ENCODE measurements at regions of chr19 and their contacts with region 1.

Region 1: DNA sequence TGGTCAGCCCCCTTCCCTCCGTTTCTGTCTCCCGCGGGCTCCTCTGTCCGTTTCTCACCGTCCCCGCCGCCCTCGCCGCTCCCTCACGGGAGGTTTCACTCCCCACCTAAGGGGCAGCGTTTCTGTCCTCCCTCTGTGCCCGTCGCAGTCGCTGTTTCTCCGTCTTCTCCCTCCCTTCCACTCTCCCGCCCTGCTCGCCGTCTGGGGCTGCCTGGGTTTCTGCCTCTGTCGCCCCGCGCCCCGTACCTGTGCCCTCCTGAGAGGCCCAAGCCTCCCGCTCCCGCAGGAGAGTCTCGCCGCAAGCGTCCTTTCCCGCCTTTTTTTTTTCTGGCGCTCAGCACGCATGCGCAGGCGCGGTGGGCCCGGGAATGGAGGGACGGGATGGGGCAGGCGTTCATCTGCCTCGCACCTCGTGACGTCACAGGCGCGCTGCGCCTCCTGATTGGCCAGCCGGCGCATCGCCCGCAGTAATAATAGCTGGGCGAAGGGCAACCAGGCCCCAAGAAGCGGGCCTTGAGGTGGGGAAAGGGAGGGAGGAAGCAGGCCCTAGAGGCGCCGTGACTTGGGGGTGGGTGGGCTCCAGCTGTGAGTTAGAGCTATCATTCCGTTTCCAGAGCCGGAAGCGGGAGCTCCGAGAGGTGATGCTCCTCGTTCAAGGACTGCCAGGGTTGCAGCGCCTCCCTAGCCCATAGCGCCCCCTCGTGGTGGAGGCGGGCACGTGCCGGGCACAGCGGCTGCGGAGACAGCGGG is 15.4 kb downstream of the SSC5D start:
- DNase-seq: peak; percentile 78 to 100
- H3K4me3 ChIP-seq: peak overlapping the region in 1 of 4 experiments; percentile 43; a peak in 2 of 8 replicates
- H3K27ac ChIP-seq: no peak overlapping the region
- H3K4me1 ChIP-seq: no peaks in the 10 kb centered on the region
- H3K27me3 ChIP-seq: peaks cover 11 to 23% (median 17%) of the 10 kb centered on the region in 4 experiments
- CTCF ChIP-seq: peak; percentile 95 to 98 (median 95)
- EP300 ChIP-seq: no peak
- POLR2A ChIP-seq: no peak
- RAD21 ChIP-seq: peak; percentile 93

Region 2: GRCh38 chr19:55467236-55468053 is 36.2 kb before region 1 on chr19:
- CTCF ChIA-PET with region 1: interaction called, 31 read pairs
- POLR2A ChIA-PET with region 1: interaction called, 4 read pairs
- DNase-seq: peak in 1 of 2 experiments; percentile 94
- H3K4me3 ChIP-seq: no peak overlapping the region
- H3K27ac ChIP-seq: no peak overlapping the region
- H3K4me1 ChIP-seq: peaks cover 3 to 23% (median 11%) of the 10 kb centered on the region in 4 experiments
- H3K27me3 ChIP-seq: no peaks in the 10 kb centered on the region; a peak in 1 of 7 replicates
- CTCF ChIP-seq: peak; percentile 87 to 93 (median 89)
- EP300 ChIP-seq: peak in 1 of 2 experiments; percentile 63; a peak in 1 of 3 replicates
- POLR2A ChIP-seq: no peak
- RAD21 ChIP-seq: peak; percentile 56 to 73

Region 3: GRCh38 chr19:55476100-55476775 is 27.4 kb before region 1 on chr19 and contains the start of gene ZNF628:
- CTCF ChIA-PET with region 1: interaction called, 28 read pairs
- POLR2A ChIA-PET with region 1: interaction called, 3 read pairs
- DNase-seq: peak; percentile 90 to 96
- H3K4me3 ChIP-seq: peak within 1 kb of the TSS; percentile 66 to 95 (median 80)
- H3K27ac ChIP-seq: peak within 1 kb of the TSS; percentile 47; the same call in 1 of the 2 replicates
- H3K4me1 ChIP-seq: peaks cover 0 to 20% (median 7%) of the 10 kb centered on the region in 4 experiments; a peak in 5 of 7 replicates
- H3K27me3 ChIP-seq: no peaks in the 10 kb centered on the region; a peak in 2 of 7 replicates
- CTCF ChIP-seq: no peak
- EP300 ChIP-seq: no peak
- POLR2A ChIP-seq: peak in 1 of 2 experiments; percentile 64; a peak in 1 of 3 replicates
- RAD21 ChIP-seq: no peak
- total RNA-seq, gene ZNF628: 10.8 and 12.9 TPM in 2 replicates

Region 4: GRCh38 chr19:55484593-55485438 is 18.9 kb before region 1 on chr19 and contains the start of gene NAT14:
- CTCF ChIA-PET with region 1: interaction called, 28 read pairs
- POLR2A ChIA-PET with region 1: interaction called, 50 read pairs
- DNase-seq: peak; percentile 68 to 97
- H3K4me3 ChIP-seq: peak within 1 kb of the TSS; percentile 46 to 88 (median 76)
- H3K27ac ChIP-seq: peak within 1 kb of the TSS; percentile 69; the same call in 1 of the 2 replicates
- H3K4me1 ChIP-seq: peaks cover 0 to 50% (median 36%) of the 10 kb centered on the region in 4 experiments; a peak in 6 of 7 replicates
- H3K27me3 ChIP-seq: no peaks in the 10 kb centered on the region
- CTCF ChIP-seq: no peak
- EP300 ChIP-seq: peak in 1 of 2 experiments; percentile 50; a peak in 1 of 3 replicates
- POLR2A ChIP-seq: peak in 1 of 2 experiments; percentile 55; a peak in 2 of 3 replicates
- RAD21 ChIP-seq: no peak
- total RNA-seq, gene NAT14: 69.1 and 71.2 TPM in 2 replicates

Region 5: GRCh38 chr19:55516878-55517620 is 13.4 kb after region 1 on chr19:
- CTCF ChIA-PET with region 1: interaction called, 12 read pairs
- POLR2A ChIA-PET with region 1: interaction called, 3 read pairs
- DNase-seq: peak; percentile 83 to 99
- H3K4me3 ChIP-seq: peak overlapping the region in 1 of 4 experiments; percentile 46; a peak in 2 of 8 replicates
- H3K27ac ChIP-seq: no peak overlapping the region
- H3K4me1 ChIP-seq: no peaks in the 10 kb centered on the region; a peak in 1 of 7 replicates
- H3K27me3 ChIP-seq: no peaks in the 10 kb centered on the region; a peak in 2 of 7 replicates
- CTCF ChIP-seq: peak; percentile 86 to 93 (median 90)
- EP300 ChIP-seq: no peak
- POLR2A ChIP-seq: no peak
- RAD21 ChIP-seq: peak; percentile 91 to 93